Adrenal gland (tissue), 19 donors: ENCODE measurements at regions of chr18 and their contacts with region 1.

Region 1: DNA sequence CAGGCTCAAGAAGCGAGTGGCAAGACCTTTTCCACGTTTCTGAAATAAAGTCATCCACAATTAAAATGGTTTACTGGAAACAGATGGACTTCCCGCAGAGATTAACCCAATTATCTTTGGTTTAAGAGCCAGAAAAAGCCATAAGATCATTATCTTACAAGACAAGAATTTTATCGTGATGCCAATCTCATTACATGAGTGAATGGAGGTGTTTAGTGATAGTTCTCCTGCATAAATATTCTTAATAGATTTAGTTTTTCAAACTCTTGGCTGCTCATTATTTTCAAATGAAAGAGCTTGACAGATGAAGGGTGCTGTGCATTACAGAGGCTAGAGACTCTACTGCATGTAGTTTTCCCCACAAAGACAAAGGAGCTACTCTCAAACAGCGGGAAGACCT is 1028.4 kb upstream of the PIK3C3 start:
- DNase-seq: no peak
- H3K4me3 ChIP-seq: no peak overlapping the region
- H3K27ac ChIP-seq: no peak overlapping the region
- H3K4me1 ChIP-seq: no peaks in the 10 kb centered on the region
- H3K27me3 ChIP-seq: no peaks in the 10 kb centered on the region
- CTCF ChIP-seq: no peak
- POLR2A ChIP-seq: no peak

Region 2: GRCh38 chr18:40529478-40529877 is 397.2 kb before region 1 on chr18:
- intact Hi-C with region 1: no loop called
- DNase-seq: no peak
- H3K4me3 ChIP-seq: no peak overlapping the region
- H3K27ac ChIP-seq: no peak overlapping the region
- H3K4me1 ChIP-seq: no peaks in the 10 kb centered on the region
- H3K27me3 ChIP-seq: no peaks in the 10 kb centered on the region
- CTCF ChIP-seq: no peak
- POLR2A ChIP-seq: no peak

Region 3: DNA sequence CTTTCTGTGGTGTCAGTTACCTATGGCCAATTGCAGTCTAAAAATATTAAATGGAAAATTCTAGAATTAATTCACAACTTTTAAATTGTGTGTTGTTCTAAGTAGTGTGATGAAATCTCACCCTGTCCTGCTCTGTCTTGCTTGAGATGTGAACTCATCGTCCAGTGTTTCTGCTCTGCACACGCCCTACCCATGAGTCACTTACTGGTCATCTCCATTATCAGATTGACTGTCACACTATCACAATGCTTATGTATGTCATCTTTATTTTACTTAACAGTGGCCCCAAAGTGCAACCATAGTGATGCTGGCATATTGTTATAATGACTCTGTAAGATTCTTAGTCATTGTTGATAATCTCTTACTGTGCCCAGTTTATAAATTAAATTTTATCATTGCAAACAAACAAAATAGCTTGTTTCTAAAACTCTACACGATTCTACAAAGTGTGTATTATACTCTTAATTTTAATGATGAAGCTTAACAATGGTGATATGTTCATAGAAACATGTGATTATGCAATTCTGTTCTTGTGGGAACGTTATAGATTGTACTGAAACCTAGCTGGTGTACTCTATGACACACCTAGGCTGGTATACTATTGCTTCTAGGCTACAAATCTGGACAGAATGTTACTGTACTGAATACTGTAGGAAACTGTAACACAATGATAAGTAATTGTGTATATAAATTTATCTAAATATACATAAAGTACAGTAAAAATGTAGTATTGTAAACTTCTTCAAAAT is 58.4 kb before region 1 on chr18:
- intact Hi-C with region 1: loop called in 1 of 2 experiments (anchors 10 kb)
- DNase-seq: no peak
- H3K4me3 ChIP-seq: no peak overlapping the region
- H3K27ac ChIP-seq: no peak overlapping the region
- H3K4me1 ChIP-seq: no peaks in the 10 kb centered on the region
- H3K27me3 ChIP-seq: no peaks in the 10 kb centered on the region
- CTCF ChIP-seq: no peak
- POLR2A ChIP-seq: no peak